ENCODE measurements at regions of chr5 and their contacts with region 1.

Region 1: GRCh38 chr5:170411100-170411499 is 21.9 kb upstream of the KCNMB1 start:
- DNase-seq: peak; percentile 40
- CTCF ChIP-seq: peak; percentile 38

Region 2: GRCh38 chr5:170363671-170364070 is 47.4 kb before region 1 on chr5:
- CTCF ChIA-PET with region 1: no interaction called
- POLR2A ChIA-PET with region 1: no interaction called
- DNase-seq: no peak
- CTCF ChIP-seq: no peak

Region 3: DNA sequence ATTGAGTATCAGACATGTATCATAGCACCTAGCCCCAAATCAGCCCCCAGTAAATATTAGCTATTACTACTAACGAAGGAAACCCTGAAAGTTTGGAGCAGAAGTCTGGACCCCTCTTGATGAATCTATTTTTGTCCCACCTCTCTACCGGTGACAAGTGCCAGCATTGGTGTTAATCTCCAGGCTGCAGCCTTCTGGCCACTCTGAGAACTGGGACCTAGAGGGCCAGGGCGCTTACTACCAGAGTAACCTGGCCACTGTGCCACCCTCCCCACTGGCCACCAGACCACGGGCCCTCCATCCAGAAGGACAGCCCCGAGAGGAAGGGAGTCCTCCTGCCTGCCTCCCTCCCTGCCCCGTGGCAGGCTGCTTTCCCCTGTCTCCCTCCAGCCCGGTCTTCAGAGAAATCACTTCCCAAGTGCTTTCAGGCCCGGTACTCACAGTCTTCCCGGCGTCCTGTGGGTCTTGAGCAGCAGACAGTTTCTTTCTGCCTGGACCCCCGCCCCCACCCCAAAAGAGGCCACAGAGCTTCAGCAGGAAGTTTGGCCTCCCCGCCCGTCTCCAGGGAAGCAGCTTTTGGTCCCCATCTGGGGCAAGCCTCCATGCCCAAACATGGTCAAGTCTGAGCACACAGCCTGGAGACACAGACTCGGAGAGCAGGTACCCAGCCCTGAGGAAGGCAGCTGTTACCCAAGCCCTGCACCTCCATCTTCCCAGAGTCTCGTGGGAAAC is 22.1 kb before region 1 on chr5 and contains the start of gene KCNMB1:
- CTCF ChIA-PET with region 1: interaction called, 13 read pairs
- POLR2A ChIA-PET with region 1: no interaction called
- DNase-seq: no peak
- CTCF ChIP-seq: no peak

Region 4: DNA sequence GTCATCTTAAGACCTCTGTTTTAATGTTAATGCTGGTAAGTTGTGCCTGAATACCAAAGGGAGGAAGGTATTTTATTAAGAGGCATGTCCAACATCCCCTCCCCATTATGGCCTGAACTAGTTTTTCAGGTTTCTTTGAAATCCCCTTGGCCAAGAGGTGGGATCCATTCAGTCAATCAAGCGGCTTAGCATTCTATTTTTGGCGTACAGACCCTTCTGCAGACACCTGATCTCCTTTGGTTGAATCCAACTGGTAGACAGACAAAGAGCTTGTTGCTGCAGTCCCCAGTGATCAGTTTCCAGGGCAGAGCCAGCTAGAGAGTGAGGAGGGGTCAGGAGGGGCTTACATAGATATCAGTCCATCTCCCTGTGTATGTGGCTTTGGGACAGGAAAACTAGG is 14.0 kb before region 1 on chr5:
- CTCF ChIA-PET with region 1: interaction called, 11 read pairs
- POLR2A ChIA-PET with region 1: no interaction called
- DNase-seq: no peak
- CTCF ChIP-seq: no peak

Measured in GM10248 (cell line).